ENCODE measurements at regions of chr1 and their contacts with region 1.

Region 1: DNA sequence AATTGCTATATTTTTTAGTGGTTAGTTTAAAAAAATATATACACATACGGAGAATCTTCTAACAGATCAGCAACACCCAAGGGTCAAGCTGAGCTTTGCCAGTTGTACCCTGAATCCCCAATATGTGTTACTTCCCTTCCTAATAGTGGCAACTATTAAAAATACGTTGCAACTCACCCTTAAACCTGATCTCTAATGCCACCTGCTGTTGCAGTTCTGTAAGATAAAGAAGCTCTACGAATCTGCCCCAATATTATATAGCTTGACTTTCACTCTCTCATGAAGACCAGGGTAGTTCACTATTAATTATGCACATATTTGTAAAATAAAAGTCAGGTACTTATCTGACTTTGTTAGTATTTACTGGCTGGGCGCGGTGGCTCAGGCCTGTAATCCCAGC is 58.4 kb downstream of the ASH1L start:
- DNase-seq: no peak
- ATAC-seq: peak in 4 of 8 donors; percentile 40 to 57 (median 54)
- H3K4me3 ChIP-seq: no peak overlapping the region
- H3K27ac ChIP-seq: no peak overlapping the region
- H3K4me1 ChIP-seq: peaks cover 0 to 61% (median 36%) of the 10 kb centered on the region in 9 donors
- H3K27me3 ChIP-seq: no peaks in the 10 kb centered on the region
- CTCF ChIP-seq: peak in 7 of 9 donors; percentile 30 to 57 (median 45)

Region 2: DNA sequence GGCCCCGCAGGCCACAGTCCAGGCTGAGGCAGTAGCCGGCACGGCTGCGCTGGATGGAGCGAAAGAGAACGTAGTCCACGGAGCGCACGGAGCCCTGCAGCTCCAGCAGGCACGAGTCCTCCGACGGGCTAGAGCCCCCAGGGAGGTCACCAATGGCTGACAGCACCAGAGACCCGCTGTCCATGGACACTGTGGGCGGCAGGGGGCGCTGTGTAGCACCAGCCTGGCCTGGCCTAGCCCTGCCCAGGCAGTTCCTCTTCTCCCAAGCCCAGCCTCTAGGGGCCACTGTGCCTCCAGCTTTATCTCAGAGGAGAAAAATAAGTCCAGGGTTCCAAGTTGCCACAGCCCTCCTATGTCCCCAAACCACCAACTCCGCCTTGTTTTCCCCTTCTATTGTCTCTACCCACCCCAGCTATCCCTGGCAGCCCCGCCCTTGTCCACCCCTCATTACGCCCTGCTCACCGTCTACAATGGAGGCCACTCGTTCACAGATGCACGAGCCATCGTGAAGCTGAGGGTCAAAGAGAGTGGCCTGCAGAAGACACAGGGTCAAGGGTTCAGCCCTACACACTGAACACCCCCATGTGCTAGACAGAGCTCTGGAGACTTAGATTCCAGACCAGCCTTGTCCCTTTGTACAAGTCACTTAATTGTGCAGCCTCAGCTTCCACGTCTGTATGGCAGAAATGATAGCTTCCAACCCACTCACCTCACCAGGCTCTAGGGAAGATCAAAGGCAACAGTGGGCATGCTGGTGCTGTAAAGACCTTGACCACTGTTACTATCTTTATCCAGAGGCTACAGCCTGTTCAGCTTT is 253.4 kb before region 1 on chr1:
- intact Hi-C with region 1: loop called in 1 of 10 experiments (anchors 5 kb)
- DNase-seq: peak; percentile 93 to 95
- ATAC-seq: peak; percentile 80 to 89 (median 84)
- H3K4me3 ChIP-seq: peak overlapping the region in 7 of 10 donors; percentile 12 to 57 (median 37)
- H3K27ac ChIP-seq: peak overlapping the region in 8 of 10 donors; percentile 15 to 90 (median 38)
- H3K4me1 ChIP-seq: peaks cover 12 to 36% (median 29%) of the 10 kb centered on the region in 9 donors
- H3K27me3 ChIP-seq: no peaks in the 10 kb centered on the region
- CTCF ChIP-seq: peak in 8 of 9 donors; percentile 99 to 100 (median 100)

Region 3: DNA sequence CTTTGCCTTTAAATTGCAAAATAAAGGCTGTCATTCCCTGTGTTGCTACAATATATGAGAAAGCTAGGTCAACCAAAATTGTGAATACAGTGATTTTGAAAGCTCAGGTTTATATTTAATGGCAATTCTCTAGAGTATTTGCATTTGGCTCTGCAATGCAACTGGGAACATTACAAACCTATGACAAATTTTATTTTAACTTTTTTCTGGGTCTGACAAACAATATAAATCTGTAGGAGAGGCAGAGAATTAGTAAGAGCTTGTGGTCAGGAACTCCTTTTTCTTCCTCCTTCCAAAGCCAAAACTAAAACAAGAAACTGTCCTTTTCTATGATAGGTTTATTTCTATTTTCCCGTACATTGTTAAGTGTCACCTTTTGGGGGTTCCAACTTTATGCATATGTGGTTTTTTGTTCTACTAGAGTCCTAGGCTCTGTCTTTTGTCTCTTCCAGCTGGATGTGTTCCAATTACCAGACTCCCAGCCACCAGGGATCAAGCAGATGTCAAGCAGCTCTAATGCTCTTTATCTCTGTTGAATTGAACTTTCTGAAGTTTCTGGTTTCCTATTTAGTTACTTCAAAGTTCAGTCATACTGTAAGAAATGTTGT is 48.5 kb before region 1 on chr1:
- intact Hi-C with region 1: loop called in 1 of 10 experiments (anchors 10 kb)
- DNase-seq: peak in 1 of 2 donors; percentile 46
- ATAC-seq: peak in 6 of 8 donors; percentile 43 to 81 (median 58)
- H3K4me3 ChIP-seq: no peak overlapping the region
- H3K27ac ChIP-seq: peak overlapping the region in 3 of 10 donors; percentile 5 to 26 (median 22)
- H3K4me1 ChIP-seq: peaks cover 8 to 21% (median 17%) of the 10 kb centered on the region in 9 donors
- H3K27me3 ChIP-seq: no peaks in the 10 kb centered on the region
- CTCF ChIP-seq: no peak

Region 4: DNA sequence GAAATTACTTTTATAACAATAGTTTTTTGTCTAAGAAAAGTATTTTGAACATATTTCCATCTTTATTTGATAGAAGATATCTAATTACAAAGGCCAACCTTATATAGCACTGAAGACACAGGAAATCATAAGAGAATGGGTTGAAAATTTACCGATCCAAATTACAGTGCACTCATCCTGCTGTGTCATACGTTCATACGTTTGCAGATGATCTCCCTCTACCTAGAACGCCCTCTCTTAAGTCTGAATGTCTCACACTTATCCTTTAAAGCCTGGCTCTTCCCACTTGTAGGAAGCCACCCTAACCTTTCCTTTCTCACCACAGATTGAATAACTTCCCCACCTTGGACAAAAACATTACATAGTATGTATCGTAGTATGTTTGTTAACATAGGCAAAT is 49.1 kb after region 1 on chr1:
- intact Hi-C with region 1: loop called in 1 of 10 experiments (anchors 10 kb)
- DNase-seq: no peak
- ATAC-seq: no peak
- H3K4me3 ChIP-seq: no peak overlapping the region
- H3K27ac ChIP-seq: no peak overlapping the region
- H3K4me1 ChIP-seq: peaks cover 0 to 34% (median 9%) of the 10 kb centered on the region in 9 donors
- H3K27me3 ChIP-seq: no peaks in the 10 kb centered on the region
- CTCF ChIP-seq: no peak